ENCODE measurements at regions of chr20 and their contacts with region 1.

Region 1: DNA sequence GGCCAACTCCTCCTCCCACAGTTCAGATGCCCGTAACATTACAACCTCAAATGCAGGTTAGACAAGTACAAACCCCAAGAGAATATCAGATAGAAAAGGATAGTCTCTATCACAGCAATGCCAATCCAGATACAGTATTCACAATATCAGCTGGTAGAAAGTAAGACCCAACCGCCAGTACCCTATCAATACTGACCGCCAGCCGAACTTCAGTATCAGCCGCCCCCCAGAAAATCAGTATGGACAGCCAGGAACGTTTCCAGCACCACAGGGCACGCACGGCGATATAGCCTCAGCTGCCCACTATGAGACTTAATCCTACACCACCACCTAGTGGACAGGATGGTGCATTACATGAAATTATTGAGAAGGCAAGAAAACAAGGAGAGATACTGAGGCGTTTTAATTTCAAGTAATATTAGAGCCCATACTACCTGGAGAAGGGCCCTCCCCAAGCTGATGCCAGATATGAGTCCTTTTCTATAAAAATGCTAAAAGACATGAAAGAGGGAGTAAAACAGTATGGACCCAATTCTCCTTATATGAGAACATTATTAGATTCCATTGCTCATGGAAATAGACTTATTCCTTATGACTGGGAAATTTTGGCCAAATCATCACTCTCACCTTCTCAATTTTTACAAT is 17.6 kb upstream of the EIF2S2 start:
- DNase-seq: peak; percentile 37 to 64
- ATAC-seq: peak; percentile 69 to 83 (median 78)
- H3K4me3 ChIP-seq: no peak overlapping the region
- H3K27ac ChIP-seq: no peak overlapping the region
- H3K4me1 ChIP-seq: peaks cover 0 to 7% (median 0%) of the 10 kb centered on the region in 9 donors
- H3K27me3 ChIP-seq: no peaks in the 10 kb centered on the region
- CTCF ChIP-seq: peak; percentile 83 to 93 (median 86)

Region 2: DNA sequence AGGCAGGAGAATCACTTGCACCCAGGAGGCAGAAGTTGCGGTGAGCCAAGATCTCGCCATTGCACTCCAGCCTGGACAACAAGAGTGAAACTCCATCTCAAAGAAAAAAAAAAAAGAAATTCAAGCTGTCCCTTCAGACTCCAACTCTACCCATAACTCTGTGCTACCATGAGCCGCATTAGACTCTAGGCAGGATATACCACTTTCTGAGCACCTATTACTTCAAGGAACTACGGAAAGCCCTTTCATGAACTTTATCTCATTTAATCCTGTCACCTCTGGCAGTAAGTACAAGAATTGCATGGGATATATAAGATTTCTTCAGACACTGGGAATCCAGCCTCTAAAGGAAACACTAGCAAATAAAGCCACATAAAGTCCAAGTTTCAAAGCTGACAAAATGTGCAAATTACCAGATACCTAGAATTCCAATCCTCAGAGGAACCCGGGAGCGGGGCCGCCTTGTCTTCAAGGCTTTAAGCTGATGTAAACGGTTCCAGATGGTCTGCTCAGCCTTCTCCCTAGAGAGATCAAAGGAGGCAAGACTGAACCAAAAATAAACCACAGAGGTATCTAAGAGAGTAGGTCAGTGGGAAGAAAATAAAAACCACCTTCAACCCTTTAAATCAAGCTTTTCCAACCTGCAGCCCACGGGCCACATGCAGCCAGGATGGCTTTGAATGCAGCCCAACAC is 737.8 kb before region 1 on chr20:
- intact Hi-C with region 1: loop called in 1 of 10 experiments (anchors 10 kb)
- DNase-seq: no peak
- ATAC-seq: peak in 1 of 8 donors; percentile 25
- H3K4me3 ChIP-seq: no peak overlapping the region
- H3K27ac ChIP-seq: no peak overlapping the region
- H3K4me1 ChIP-seq: peaks cover 0 to 7% (median 0%) of the 10 kb centered on the region in 9 donors
- H3K27me3 ChIP-seq: no peaks in the 10 kb centered on the region
- CTCF ChIP-seq: no peak

Region 3: DNA sequence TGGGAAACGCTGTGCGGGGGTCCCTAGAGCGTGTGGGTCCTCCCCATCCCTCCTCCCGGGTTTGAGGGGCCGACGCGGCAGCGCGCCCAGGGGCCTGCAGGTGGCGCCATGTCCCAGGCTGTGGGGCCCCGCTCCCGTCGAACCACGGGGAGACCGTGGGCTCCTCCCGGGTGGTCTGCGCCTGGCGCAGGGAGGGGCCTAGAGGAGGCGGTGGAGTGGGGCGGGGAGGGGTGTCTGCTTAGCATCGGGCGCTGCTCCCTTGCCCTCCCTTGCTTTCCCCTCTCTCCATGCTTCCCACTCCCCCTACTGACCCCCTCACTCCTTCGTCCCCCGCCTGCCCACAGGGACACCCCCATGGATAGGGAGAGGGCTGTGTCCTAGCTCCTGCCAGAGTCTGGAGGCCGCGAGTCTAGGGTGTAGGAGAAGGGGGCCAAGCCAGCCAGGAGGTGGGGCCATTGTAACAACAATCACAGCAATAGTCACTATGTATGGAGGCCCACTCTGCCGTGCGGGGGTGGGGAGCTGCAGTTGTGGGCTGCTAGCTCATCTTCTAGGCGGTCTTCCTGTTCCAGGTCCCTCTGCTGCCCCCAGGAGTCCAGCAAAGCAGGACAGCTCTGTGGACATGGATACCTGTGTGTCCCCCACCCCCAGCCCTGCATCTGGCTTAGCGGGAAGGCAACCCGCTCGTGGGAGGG is 266.8 kb before region 1 on chr20:
- intact Hi-C with region 1: loop called (anchors 2 to 10 kb)
- DNase-seq: peak; percentile 46 to 47
- ATAC-seq: peak; percentile 67 to 85 (median 78)
- H3K4me3 ChIP-seq: peak overlapping the region in 6 of 10 donors; percentile 10 to 27 (median 18)
- H3K27ac ChIP-seq: no peak overlapping the region
- H3K4me1 ChIP-seq: peaks cover 2 to 29% (median 21%) of the 10 kb centered on the region in 9 donors
- H3K27me3 ChIP-seq: no peaks in the 10 kb centered on the region
- CTCF ChIP-seq: peak; percentile 39 to 84 (median 70)

Region 4: DNA sequence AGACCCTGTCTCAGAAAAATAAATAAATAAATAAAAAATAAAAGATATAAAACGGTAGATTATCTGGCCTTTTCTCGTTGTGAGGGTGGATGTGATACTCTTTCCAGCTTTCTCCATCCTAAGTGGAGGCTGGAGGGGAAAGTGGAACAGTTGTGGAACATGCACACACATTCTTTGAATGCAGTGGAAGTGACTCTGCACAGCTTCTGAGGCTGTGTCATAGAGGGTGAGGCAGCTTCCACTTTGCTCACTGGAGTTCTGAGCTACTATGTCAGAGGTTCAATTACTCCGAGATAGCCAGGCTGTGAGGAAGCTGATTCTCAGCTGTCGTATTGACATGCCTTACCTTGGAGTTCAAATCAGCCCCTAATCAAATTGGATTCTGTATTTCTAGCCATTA is 236.3 kb before region 1 on chr20:
- intact Hi-C with region 1: no loop called
- DNase-seq: no peak
- ATAC-seq: no peak
- H3K4me3 ChIP-seq: no peak overlapping the region
- H3K27ac ChIP-seq: no peak overlapping the region
- H3K4me1 ChIP-seq: peaks cover 0 to 8% (median 0%) of the 10 kb centered on the region in 9 donors
- H3K27me3 ChIP-seq: no peaks in the 10 kb centered on the region
- CTCF ChIP-seq: no peak

Region 5: DNA sequence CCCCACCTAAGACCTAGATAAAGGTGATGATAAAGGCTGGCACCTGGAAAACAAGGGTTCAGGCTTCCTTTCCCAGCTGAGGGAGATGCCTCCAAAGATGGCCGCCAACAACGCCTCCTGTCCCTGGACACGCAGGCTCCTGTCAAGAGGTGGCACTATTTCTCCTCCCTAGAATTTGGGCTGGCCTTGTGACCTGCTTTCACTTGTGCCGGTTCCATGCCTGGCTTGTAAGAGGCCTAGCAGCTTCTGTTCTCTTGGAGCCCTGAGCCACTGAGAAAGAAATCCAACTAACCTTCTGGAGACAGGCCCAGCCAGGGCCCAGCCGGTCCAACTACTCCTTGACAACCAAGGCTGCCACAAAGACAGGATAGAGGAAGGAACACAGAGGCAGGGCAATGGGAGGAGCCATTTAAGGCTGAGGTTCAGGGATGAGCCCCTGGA is 196.2 kb before region 1 on chr20:
- intact Hi-C with region 1: loop called in 7 of 10 experiments (anchors 2 to 10 kb)
- DNase-seq: peak; percentile 34 to 65
- ATAC-seq: peak; percentile 81 to 97 (median 89)
- H3K4me3 ChIP-seq: no peak overlapping the region
- H3K27ac ChIP-seq: peak overlapping the region in 1 of 10 donors; percentile 26
- H3K4me1 ChIP-seq: peaks cover 0 to 4% (median 0%) of the 10 kb centered on the region in 9 donors
- H3K27me3 ChIP-seq: no peaks in the 10 kb centered on the region
- CTCF ChIP-seq: peak; percentile 35 to 69 (median 59)

Region 6: DNA sequence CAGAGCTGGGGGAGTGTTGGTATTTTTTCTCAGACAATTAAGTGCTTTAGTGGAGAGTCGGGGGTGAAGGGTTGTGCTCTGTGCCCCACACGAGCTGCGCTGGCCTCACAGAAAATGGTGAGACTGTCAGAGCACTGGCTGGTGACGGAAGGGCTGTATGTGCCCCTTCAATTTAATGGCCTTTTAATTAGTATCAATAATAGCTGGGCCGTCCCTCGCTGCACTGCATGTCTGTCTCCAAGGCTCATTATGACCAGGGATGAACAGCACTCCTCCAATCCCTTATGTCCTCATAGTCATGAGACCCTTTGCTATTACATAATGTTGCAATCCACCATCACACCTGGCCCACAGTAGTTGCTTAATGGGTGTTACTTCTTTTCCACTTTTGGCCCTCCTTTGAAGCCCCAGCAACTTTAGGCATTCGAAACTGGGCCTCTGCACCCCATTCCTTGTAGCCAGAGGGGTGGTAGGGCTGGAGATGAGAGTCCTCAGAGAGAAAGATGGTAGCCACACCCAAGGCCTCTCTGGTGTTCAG is 145.4 kb before region 1 on chr20:
- intact Hi-C with region 1: no loop called
- DNase-seq: no peak
- ATAC-seq: no peak
- H3K4me3 ChIP-seq: no peak overlapping the region
- H3K27ac ChIP-seq: no peak overlapping the region
- H3K4me1 ChIP-seq: no peaks in the 10 kb centered on the region
- H3K27me3 ChIP-seq: no peaks in the 10 kb centered on the region
- CTCF ChIP-seq: no peak

Region 7: DNA sequence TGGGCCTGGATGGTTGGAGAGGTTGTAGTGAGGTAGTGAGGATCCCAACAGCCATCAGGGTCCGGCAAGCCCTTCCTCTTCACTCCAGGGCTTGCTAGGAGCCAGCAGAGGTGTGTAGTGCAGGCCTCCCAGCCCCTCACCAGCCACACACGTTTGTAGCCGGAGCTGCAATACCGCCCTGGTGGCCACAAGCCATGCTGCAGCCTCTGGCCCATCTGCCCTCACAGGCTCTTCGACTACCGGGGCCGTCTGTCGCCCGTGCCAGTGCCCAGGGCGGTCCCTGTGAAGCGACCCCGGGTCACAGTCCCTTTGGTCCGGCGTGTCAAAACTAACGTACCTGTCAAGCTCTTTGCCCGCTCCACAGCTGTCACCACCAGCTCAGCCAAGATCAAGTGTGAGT is 54.0 kb before region 1 on chr20:
- intact Hi-C with region 1: loop called in 3 of 10 experiments (anchors 5 to 10 kb)
- DNase-seq: no peak
- ATAC-seq: no peak
- H3K4me3 ChIP-seq: no peak overlapping the region
- H3K27ac ChIP-seq: no peak overlapping the region
- H3K4me1 ChIP-seq: peaks cover 0 to 11% (median 0%) of the 10 kb centered on the region in 9 donors
- H3K27me3 ChIP-seq: no peaks in the 10 kb centered on the region
- CTCF ChIP-seq: no peak

Region 8: GRCh38 chr20:34210271-34210670 is 80.6 kb after region 1 on chr20:
- intact Hi-C with region 1: no loop called
- DNase-seq: no peak
- ATAC-seq: no peak
- H3K4me3 ChIP-seq: no peak overlapping the region
- H3K27ac ChIP-seq: no peak overlapping the region
- H3K4me1 ChIP-seq: peaks cover 0 to 2% (median 0%) of the 10 kb centered on the region in 9 donors
- H3K27me3 ChIP-seq: no peaks in the 10 kb centered on the region
- CTCF ChIP-seq: no peak